G401 (cell line): ENCODE measurements at regions of chr22 and their contacts with region 1.

Region 1: DNA sequence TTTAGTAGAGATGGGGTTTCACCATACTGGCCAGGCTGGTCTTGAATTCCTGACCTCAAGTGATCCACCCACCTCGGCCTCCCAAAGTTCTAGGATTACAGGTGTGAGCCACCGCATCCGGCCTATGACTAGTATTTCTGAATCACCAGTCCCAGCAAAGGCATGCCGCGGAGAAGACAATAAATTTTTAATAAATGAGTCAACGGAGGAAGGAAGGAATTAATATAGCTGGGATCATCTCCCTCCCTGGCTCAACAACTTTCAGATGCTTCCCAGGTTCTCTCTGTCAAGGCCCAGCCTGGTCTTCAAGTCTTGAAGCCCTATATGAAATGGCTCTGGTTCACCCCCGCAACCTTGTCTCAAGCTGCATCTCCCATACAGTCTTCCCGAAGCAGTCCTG is 45.7 kb downstream of the CYTH4 start:
- DNase-seq: no peak

Region 2: DNA sequence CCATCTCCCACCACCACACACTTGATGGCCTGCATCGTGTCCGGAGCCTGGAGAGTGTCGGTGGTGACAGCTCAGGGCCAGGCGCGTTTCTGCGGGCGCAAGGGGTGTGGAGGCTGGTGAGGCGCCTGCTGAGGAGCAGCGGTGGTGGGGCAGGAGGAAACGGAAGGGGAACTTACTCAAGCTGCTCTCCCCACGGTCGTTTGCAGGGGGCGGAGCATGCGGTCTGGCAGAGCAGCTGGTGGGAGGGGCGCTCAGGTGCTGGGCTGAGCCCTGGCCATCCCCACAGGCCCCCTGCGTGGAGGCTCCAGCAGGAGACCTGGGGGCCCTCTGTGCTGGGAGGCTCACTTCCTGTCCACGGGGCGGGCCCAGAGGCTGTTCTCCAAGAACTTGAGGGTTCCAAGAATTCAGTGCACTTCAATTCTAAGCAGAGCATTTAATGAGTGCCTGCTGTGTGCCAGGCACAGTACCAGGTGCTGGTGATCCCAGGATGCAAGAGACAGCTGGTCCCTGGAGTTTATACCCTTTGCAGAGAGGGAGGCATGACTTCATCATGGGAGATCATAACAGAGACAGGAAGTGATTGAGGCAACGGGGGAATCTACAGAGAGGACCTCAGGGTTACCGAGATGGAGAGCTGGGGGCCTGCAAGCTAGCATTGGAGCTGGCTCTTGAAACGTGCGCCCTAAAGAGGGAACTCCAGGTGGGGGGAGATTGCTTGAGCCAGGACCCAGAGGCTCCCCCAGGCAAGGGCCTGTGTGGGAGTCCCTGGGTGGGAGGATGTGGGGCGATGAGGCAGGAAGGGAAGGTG is 83.7 kb before region 1 on chr22 and contains the start of gene RAC2:
- in situ Hi-C with region 1: no loop called
- DNase-seq: no peak
- total RNA-seq, gene RAC2: not detected in 2 replicates

Region 3: DNA sequence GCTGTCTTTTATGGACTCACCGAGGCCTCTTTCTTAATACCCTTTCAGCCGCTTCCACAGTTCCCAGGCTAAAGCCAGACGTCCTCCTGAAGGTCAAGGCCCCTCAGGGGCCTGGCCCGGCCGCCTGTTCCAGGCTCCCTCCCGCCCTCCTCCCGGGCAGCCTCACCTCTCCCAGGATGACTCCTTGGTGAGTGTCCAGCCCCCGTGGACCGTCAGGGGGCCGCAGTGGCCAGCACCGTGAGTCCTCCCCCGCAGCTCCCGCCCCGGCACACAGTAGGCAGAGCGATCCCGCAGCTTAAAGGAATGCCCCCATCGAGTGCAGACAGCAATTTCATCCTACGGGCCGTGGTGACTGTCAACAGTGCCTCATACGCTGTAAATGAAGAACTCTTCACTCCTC is 66.3 kb after region 1 on chr22:
- in situ Hi-C with region 1: loop called (anchors 10 kb)
- DNase-seq: no peak

Region 4: GRCh38 chr22:37448511-37449127 is 120.6 kb after region 1 on chr22:
- in situ Hi-C with region 1: loop called (anchors 5 kb)
- DNase-seq: no peak